ENCODE measurements at regions of chr7 and their contacts with region 1.

Region 1: GRCh38 chr7:85516675-85517074 is 329.8 kb upstream of the SEMA3D start:
- DNase-seq: no peak
- H3K4me3 ChIP-seq: no peak overlapping the region
- H3K27ac ChIP-seq: no peak overlapping the region
- H3K4me1 ChIP-seq: no peaks in the 10 kb centered on the region
- H3K27me3 ChIP-seq: no peaks in the 10 kb centered on the region
- CTCF ChIP-seq: no peak

Region 2: GRCh38 chr7:85356916-85357315 is 159.8 kb before region 1 on chr7:
- CTCF ChIA-PET with region 1: no interaction called
- POLR2A ChIA-PET with region 1: no interaction called
- intact Hi-C with region 1: loop called (anchors 10 kb)
- DNase-seq: no peak
- H3K4me3 ChIP-seq: no peak overlapping the region
- H3K27ac ChIP-seq: no peak overlapping the region
- H3K4me1 ChIP-seq: no peaks in the 10 kb centered on the region
- H3K27me3 ChIP-seq: no peaks in the 10 kb centered on the region
- CTCF ChIP-seq: no peak

Region 3: GRCh38 chr7:85474234-85474633 is 42.4 kb before region 1 on chr7:
- CTCF ChIA-PET with region 1: no interaction called
- POLR2A ChIA-PET with region 1: no interaction called
- intact Hi-C with region 1: no loop called
- DNase-seq: no peak
- H3K4me3 ChIP-seq: no peak overlapping the region
- H3K27ac ChIP-seq: no peak overlapping the region
- H3K4me1 ChIP-seq: no peaks in the 10 kb centered on the region
- H3K27me3 ChIP-seq: no peaks in the 10 kb centered on the region
- CTCF ChIP-seq: no peak

Region 4: GRCh38 chr7:85829817-85830432 is 313.2 kb after region 1 on chr7:
- CTCF ChIA-PET with region 1: no interaction called
- POLR2A ChIA-PET with region 1: no interaction called
- intact Hi-C with region 1: no loop called
- DNase-seq: no peak
- H3K4me3 ChIP-seq: no peak overlapping the region
- H3K27ac ChIP-seq: no peak overlapping the region
- H3K4me1 ChIP-seq: no peaks in the 10 kb centered on the region
- H3K27me3 ChIP-seq: no peaks in the 10 kb centered on the region
- CTCF ChIP-seq: peak; percentile 62

Region 5: DNA sequence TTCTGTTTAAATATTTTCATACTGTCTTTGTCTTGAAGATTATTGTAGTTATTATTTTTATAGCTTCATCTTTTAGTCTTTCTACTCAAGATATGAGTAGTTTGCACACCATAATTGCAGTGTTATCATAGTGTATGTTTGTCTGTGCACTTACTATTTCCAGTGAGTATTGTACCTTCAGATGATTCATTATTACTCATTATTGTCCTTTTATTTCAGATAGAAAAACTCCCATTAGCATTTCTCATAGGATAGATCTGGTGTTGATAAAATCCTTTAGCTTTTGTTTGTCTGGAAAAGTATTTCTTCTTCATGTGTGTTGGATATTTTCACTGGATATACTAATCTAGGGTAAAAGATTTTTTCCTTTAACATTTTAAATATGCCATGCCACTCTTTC is 480.8 kb after region 1 on chr7:
- CTCF ChIA-PET with region 1: no interaction called
- POLR2A ChIA-PET with region 1: no interaction called
- intact Hi-C with region 1: no loop called
- DNase-seq: no peak
- H3K4me3 ChIP-seq: no peak overlapping the region
- H3K27ac ChIP-seq: no peak overlapping the region
- H3K4me1 ChIP-seq: no peaks in the 10 kb centered on the region
- H3K27me3 ChIP-seq: no peaks in the 10 kb centered on the region
- CTCF ChIP-seq: no peak